Activated B cell treated with CpG ODN at 0.5 μM for 24 hours (primary cell): ENCODE measurements at regions of chr3 and their contacts with region 1.

Region 1: GRCh38 chr3:133426721-133427120 is 26.9 kb downstream of the BFSP2 start:
- DNase-seq: no peak
- ATAC-seq: no peak
- H3K4me3 Mint-ChIP-seq: no peak overlapping the region
- H3K27ac Mint-ChIP-seq: no peak overlapping the region
- H3K4me1 Mint-ChIP-seq: peaks cover 15% of the 10 kb centered on the region
- H3K27me3 Mint-ChIP-seq: no peaks in the 10 kb centered on the region
- CTCF ChIP-seq: no peak

Region 2: GRCh38 chr3:132659365-132660051 is 767.2 kb before region 1 on chr3 and contains the start of gene ACAD11:
- CTCF ChIA-PET with region 1: no interaction called
- POLR2A ChIA-PET with region 1: no interaction called
- intact Hi-C with region 1: loop called (anchors 5 kb)
- DNase-seq: peak; percentile 55
- ATAC-seq: peak; percentile 74
- H3K4me3 Mint-ChIP-seq: peak within 1 kb of the TSS; percentile 97
- H3K27ac Mint-ChIP-seq: peak within 1 kb of the TSS; percentile 93
- H3K4me1 Mint-ChIP-seq: peaks cover 35% of the 10 kb centered on the region
- H3K27me3 Mint-ChIP-seq: no peaks in the 10 kb centered on the region
- CTCF ChIP-seq: no peak
- total RNA-seq, gene ACAD11: 16.4 and 24.0 TPM in 2 replicates

Region 3: DNA sequence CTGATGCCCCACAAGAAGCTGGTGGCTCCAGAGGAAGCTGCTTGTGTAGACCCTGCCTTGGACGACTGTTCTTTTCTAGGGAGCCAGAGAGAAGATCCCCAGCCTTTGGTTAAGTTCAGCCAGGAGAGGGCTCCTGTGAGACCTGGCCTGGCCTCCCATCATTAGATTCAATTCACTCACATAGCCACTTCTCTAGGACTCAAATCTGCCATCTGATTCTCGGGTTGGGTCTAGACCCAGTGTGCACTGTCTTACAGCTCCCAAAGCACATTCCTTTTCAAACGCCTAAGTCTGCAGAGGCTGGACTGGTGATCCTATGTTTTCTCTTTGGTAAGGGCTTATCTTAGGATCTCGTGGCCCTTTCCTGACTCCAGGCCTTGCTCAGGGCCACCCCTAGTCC is 622.8 kb before region 1 on chr3:
- CTCF ChIA-PET with region 1: no interaction called
- POLR2A ChIA-PET with region 1: no interaction called
- intact Hi-C with region 1: loop called (anchors 5 kb)
- DNase-seq: no peak
- ATAC-seq: no peak
- H3K4me3 Mint-ChIP-seq: no peak overlapping the region
- H3K27ac Mint-ChIP-seq: no peak overlapping the region
- H3K4me1 Mint-ChIP-seq: no peaks in the 10 kb centered on the region
- H3K27me3 Mint-ChIP-seq: no peaks in the 10 kb centered on the region
- CTCF ChIP-seq: no peak

Region 4: GRCh38 chr3:133354721-133355120 is 72.0 kb before region 1 on chr3:
- CTCF ChIA-PET with region 1: no interaction called
- POLR2A ChIA-PET with region 1: no interaction called
- intact Hi-C with region 1: no loop called
- DNase-seq: no peak
- ATAC-seq: no peak
- H3K4me3 Mint-ChIP-seq: no peak overlapping the region
- H3K27ac Mint-ChIP-seq: no peak overlapping the region
- H3K4me1 Mint-ChIP-seq: no peaks in the 10 kb centered on the region
- H3K27me3 Mint-ChIP-seq: peaks cover 22% of the 10 kb centered on the region
- CTCF ChIP-seq: no peak

Region 5: DNA sequence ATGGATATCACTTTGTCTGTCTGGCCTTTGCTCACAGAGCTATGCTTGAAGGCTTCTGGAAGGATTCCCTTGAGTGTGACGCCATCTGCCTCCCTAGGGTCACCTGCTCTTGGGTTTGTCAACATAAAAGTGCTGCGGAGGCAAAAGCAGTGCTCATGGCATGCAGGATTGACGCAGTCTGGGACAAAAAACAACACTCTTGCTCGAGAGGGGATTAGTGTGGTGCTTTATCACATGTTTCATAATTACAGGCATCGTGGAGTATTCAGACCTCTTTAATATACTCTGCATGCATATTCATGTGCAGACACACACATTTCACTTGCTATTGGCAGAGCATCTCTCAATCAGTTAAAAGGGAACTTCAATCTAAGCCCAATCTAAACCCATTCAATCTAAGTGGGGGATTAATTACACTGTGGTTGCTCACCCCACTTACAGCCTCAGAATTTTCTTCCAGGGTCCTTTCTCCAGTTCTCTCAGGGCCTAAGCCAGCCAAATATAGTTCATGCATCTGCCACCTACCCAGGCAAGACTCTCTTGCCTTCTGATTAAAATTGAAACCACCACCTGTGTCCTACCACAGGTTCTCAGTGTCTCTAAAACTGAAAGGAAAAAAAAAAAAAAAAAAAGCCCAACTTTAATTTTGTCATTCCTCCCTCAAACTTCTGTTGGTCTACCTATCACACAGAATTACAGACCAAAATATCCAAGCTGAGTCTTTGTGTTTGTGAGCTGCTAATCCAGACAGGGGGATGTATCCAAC is 48.7 kb after region 1 on chr3:
- CTCF ChIA-PET with region 1: interaction called, 3 read pairs
- POLR2A ChIA-PET with region 1: no interaction called
- intact Hi-C with region 1: loop called (anchors 2 kb)
- DNase-seq: no peak
- ATAC-seq: peak; percentile 80
- H3K4me3 Mint-ChIP-seq: peak overlapping the region; percentile 64
- H3K27ac Mint-ChIP-seq: peak overlapping the region; percentile 92
- H3K4me1 Mint-ChIP-seq: peaks cover 71% of the 10 kb centered on the region
- H3K27me3 Mint-ChIP-seq: no peaks in the 10 kb centered on the region
- CTCF ChIP-seq: no peak

Region 6: DNA sequence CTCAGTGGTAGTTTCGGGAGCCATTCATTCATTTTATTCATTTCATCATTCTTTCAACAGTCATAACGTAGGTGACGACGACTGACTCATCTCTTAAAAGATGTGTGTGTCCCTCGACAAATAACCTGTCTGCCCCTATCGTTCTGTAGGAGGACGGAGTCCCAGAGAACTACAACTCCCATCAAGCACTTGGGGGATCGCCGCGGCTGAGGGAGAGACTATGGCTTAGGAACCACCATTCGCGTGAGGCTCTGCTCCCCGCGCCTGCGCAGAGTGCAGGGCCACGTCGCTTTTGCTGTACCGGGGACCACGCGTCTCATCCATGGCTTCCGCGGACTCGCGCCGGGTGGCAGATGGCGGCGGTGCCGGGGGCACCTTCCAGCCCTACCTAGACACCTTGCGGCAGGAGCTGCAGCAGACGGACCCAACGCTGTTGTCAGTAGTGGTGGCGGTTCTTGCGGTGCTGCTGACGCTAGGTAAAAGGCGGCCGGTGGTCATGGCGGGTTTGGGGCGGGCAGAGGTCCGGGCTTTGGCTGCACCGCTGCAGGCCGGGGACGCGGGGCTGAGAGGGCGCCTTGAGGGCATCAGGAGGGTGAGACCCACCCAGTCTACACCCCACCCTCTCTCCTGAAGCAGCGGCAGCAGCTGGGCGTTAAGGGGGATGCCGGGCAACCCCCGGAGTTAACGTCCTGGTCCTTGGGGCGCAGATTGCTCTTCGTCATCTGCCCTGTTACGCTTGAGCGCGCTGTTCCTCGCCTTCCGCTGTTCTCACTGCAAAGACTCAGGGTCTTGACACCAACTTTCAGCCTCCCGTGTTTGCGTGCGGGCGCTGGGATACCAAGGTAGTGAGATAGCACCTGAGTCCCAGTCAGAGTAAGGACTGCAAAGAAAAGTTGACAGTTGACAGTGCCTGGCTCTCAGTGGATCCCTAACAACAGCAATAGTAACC is 379.1 kb after region 1 on chr3 and contains the start of gene SRPRB:
- CTCF ChIA-PET with region 1: no interaction called
- POLR2A ChIA-PET with region 1: no interaction called
- intact Hi-C with region 1: loop called (anchors 2 kb)
- DNase-seq: peak; percentile 89
- ATAC-seq: peak; percentile 98
- H3K4me3 Mint-ChIP-seq: peak within 1 kb of the TSS; percentile 96
- H3K27ac Mint-ChIP-seq: peak within 1 kb of the TSS; percentile 95
- H3K4me1 Mint-ChIP-seq: peaks cover 21% of the 10 kb centered on the region
- H3K27me3 Mint-ChIP-seq: peaks cover 3% of the 10 kb centered on the region
- CTCF ChIP-seq: no peak
- total RNA-seq, gene SRPRB: 36.5 and 38.5 TPM in 2 replicates